GM10248 (cell line): ENCODE measurements at regions of chr18 and their contacts with region 1.

Region 1: DNA sequence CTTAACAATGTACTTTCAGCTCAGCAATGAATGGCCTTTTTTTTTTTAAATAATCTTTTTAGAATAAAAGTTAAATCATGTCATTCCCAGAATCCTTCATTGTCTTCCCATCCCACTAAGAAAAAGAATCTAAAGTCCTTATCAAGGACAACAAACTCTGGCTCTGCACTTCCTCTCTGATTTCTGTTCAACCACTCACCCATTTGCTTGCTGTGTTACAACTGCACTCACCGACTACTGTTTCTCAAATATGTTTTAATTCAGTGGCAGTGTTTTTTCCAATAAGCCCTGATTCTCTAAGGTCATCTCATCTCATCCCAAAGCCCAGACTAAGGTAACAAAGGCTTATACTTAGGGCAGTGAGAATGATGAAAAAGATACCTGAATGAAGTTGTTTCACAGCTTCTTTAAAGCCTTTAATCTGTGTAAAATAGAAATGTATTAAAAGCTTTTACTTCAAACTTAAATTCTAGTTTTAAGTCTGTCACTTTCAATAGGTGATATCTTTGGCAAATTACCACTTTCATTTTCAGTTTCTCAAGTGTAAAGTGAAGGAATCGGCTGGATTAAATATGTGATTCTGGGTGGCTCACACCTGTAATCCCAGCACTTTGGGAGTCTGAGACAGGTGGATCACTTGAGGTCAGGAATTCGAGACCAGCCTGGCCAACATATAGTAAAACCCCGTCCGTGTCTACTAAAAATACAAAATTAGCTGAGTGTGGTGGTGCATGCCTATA is 87.6 kb downstream of the RBBP8 start:
- DNase-seq: peak; percentile 24
- CTCF ChIP-seq: no peak

Region 2: GRCh38 chr18:23032030-23032582 is 11.4 kb after region 1 on chr18:
- CTCF ChIA-PET with region 1: interaction called, 17 read pairs
- POLR2A ChIA-PET with region 1: no interaction called
- DNase-seq: no peak
- CTCF ChIP-seq: no peak

Region 3: GRCh38 chr18:23213200-23213599 is 192.5 kb after region 1 on chr18:
- CTCF ChIA-PET with region 1: no interaction called
- POLR2A ChIA-PET with region 1: no interaction called
- DNase-seq: no peak
- CTCF ChIP-seq: no peak